GM13976 (cell line): ENCODE measurements at regions of chr18 and their contacts with region 1.

Region 1: DNA sequence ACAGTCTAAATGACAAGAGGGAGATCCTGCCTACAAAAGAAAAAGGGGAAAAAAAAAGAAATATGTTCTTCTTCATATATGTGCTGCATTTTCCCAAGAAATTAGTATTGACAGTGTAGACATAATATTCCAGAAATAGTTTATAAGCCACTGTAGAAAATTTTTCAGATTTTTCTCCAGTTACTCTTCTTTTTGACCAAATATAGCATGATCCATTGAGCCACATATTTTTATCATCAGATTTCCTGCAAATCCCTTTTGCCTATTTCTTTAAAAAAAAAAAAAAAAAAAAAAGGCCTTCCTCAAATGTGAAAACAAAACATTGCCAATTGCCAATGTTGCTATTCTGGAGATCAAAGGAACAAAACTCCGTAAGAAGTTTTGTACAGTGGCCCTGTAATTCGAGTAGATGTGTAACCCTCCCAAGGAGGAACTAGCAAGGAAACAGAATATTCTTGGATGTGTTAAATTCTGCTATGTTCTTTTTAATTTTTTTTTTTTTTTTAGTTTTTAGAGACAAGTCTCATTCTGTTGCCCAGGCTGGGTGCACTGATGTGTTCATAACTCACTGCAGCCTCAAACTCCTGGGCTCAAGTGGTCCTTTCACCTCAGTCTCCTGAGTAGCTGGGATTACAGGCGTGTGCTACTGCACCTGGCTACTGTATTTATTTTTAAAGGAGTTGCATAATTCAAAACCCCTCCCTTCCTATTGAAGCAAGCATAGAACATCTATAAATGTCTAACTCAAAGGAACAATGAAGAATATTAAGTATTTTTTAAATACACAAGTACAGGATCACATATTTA is 12.5 kb upstream of the CABYR start:
- DNase-seq: no peak
- CTCF ChIP-seq: no peak

Region 2: GRCh38 chr18:23629444-23629946 is 496.9 kb before region 1 on chr18:
- in situ Hi-C with region 1: loop called (anchors 10 kb)
- DNase-seq: peak; percentile 37
- CTCF ChIP-seq: no peak

Region 3: DNA sequence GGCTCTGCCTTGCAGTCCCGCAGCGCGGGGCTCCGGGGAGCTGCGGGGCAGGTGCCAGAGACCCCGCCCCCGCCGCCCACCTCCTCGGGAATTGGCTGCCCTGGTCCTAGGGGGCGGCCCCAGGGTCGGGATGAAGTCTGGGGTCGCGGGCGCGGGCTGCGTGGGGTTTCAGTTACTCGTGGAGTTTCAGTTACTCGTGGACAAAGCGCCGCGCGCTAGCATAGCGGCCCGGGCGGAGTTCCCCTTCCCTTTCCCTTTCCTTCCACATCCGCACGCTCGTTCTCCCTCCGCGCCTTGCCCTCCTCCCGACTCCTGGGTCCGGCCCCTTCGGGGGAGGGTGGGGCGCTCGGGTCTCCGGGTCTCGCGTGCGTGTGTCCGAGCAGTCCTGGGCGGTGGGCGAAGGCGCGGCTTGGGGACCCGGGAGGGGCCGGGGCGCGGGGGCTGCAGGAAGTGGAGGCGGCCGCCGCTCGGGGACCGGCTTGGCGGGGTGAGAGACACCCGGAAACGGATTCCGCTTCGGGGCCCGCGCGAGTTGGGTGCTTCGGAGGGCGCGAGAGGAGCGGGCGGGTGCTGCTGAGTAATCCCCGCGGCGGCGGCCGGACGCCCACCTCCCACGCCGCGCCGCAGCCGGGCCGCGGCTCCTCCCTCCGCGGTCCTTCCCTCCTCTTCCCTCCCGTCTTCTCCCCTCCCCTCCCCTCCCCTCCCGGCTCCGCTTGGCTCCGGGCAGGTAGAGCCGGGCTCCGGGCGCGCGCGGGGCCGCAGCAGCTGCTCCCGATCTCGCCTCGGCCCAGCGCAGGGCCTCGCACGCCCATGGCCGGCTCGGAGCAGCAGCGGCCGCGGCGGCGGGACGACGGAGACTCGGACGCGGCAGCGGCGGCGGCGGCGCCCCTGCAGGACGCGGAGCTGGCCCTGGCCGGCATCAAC is 112.0 kb before region 1 on chr18 and contains the start of gene TTC39C:
- in situ Hi-C with region 1: loop called (anchors 10 kb)
- DNase-seq: peak; percentile 87
- CTCF ChIP-seq: no peak

Region 4: GRCh38 chr18:24031916-24032315 is 94.4 kb before region 1 on chr18:
- in situ Hi-C with region 1: no loop called
- DNase-seq: no peak
- CTCF ChIP-seq: no peak

Region 5: GRCh38 chr18:24695168-24695567 is 568.8 kb after region 1 on chr18:
- in situ Hi-C with region 1: no loop called
- DNase-seq: no peak
- CTCF ChIP-seq: no peak